ENCODE measurements at regions of chr2 and their contacts with region 1.

Region 1: GRCh38 chr2:50143822-50144575 is 887.9 kb downstream of the NRXN1 start:
- DNase-seq: peak; percentile 68
- ATAC-seq: peak; percentile 100
- H3K4me3 ChIP-seq: peak overlapping the region; percentile 66 to 90 (median 71)
- H3K27ac ChIP-seq: no peak overlapping the region
- H3K4me1 ChIP-seq: no peaks in the 10 kb centered on the region
- H3K27me3 ChIP-seq: no peaks in the 10 kb centered on the region
- CTCF ChIP-seq: peak; percentile 77
- EP300 ChIP-seq: no peak
- POLR2A ChIP-seq: no peak
- RAD21 ChIP-seq: peak; percentile 64

Region 2: DNA sequence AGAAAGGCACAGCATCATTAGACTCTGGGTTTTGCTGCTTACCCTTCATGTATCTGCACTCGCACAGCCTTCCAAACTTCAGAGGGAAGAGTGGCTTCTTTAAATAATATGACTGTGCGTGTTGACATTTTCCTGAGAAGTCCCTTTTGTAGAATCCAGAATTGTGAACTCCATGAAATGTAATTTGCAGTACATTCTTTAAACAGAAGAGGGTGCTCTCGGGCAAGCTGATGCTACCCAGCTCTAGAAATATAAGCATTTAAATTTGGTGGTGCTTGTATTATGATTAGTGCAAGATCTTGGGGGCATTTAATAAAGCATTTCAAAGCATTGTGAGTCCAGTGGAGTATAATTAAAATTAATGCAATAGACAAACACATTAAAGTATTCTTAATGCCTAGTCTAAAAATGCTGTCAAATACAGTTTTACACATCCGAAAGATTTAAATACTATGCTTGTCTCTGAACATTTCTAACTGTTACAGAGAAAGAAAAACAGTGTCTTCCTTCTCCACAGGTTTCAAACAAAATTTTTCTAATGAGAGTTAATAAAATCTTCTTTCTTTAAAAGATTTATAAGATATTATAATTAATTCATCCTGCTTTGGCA is 1543.7 kb before region 1 on chr2:
- CTCF ChIA-PET with region 1: interaction called, 6 read pairs
- POLR2A ChIA-PET with region 1: no interaction called
- in situ Hi-C with region 1: no loop called
- intact Hi-C with region 1: loop called (anchors 5 kb)
- DNase-seq: peak; percentile 42
- ATAC-seq: peak; percentile 50
- H3K4me3 ChIP-seq: no peak overlapping the region
- H3K27ac ChIP-seq: no peak overlapping the region
- H3K4me1 ChIP-seq: no peaks in the 10 kb centered on the region
- H3K27me3 ChIP-seq: no peaks in the 10 kb centered on the region
- CTCF ChIP-seq: peak; percentile 69
- EP300 ChIP-seq: no peak
- POLR2A ChIP-seq: no peak
- RAD21 ChIP-seq: no peak; the same call in 1 of the 2 replicates

Region 3: DNA sequence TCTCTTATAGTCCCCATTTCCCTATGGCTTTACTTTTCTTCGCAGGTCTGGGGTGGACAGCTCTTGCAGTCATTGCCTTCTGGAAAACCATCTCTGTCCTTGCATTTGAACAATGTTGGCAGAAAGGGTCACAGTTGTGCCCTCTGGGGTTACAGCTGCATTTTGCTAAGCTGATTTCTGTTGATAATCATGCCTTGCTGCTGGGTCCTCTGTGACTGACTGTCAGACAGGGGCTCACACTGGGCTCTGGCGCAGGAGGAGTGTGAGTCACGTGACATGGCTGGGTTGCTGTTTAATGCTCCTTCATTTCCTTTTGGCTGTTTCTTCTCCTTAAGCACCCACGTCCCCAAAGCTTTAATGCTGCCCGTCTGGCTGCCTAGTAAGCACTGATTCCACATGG is 1191.9 kb before region 1 on chr2:
- CTCF ChIA-PET with region 1: interaction called, 10 read pairs
- POLR2A ChIA-PET with region 1: no interaction called
- in situ Hi-C with region 1: loop called (anchors 25 kb)
- intact Hi-C with region 1: no loop called
- DNase-seq: no peak
- ATAC-seq: no peak
- H3K4me3 ChIP-seq: no peak overlapping the region
- H3K27ac ChIP-seq: no peak overlapping the region
- H3K4me1 ChIP-seq: 0 out of 2 replicates have a peak, but pooled peaks cover 6% of the 10 kb centered on the region
- H3K27me3 ChIP-seq: no peaks in the 10 kb centered on the region; a peak in 1 of 5 replicates
- CTCF ChIP-seq: no peak
- EP300 ChIP-seq: no peak
- POLR2A ChIP-seq: no peak
- RAD21 ChIP-seq: no peak

Region 4: DNA sequence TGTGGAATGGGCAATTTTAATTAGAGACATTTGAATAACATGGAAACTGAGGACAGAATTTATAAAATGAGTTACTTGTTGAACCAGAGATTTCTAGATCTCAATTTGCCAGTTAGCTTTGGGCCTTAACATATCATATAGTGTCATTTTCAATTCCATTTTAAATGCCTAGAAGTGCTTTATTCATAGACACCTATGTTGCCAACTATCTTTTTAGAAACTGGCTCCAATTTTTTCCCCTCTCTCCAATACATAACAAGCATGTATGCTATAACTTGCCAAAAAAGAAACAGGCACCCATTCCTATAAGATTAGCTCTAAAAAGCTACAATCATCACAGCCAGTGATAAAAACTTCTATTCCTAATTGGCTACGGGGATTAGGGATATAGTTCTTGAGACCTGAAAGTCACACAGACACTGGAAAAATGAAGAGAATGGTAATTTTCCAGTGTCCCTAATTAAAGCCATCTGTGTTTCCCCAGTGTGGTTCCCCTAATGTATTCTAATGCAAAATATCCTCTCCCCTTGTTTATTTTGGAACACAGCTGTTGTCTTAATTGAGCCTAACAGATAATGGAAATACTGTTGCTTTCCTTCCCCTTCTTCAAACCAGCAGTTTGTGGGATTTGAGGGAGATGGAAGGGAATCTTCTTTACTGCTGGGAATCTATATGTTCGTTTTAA is 784.1 kb before region 1 on chr2:
- CTCF ChIA-PET with region 1: no interaction called
- POLR2A ChIA-PET with region 1: no interaction called
- in situ Hi-C with region 1: no loop called
- intact Hi-C with region 1: no loop called
- DNase-seq: no peak
- ATAC-seq: no peak
- H3K4me3 ChIP-seq: no peak overlapping the region
- H3K27ac ChIP-seq: no peak overlapping the region
- H3K4me1 ChIP-seq: no peaks in the 10 kb centered on the region
- H3K27me3 ChIP-seq: no peaks in the 10 kb centered on the region
- CTCF ChIP-seq: no peak
- EP300 ChIP-seq: no peak
- POLR2A ChIP-seq: no peak
- RAD21 ChIP-seq: no peak

Region 5: GRCh38 chr2:49616800-49617199 is 527.2 kb before region 1 on chr2:
- CTCF ChIA-PET with region 1: interaction called, 10 read pairs
- POLR2A ChIA-PET with region 1: no interaction called
- in situ Hi-C with region 1: loop called (anchors 10 kb)
- intact Hi-C with region 1: loop called (anchors 1 kb)
- DNase-seq: peak; percentile 30
- ATAC-seq: peak; percentile 86
- H3K4me3 ChIP-seq: no peak overlapping the region
- H3K27ac ChIP-seq: no peak overlapping the region
- H3K4me1 ChIP-seq: 0 out of 2 replicates have a peak, but pooled peaks cover 2% of the 10 kb centered on the region
- H3K27me3 ChIP-seq: no peaks in the 10 kb centered on the region
- CTCF ChIP-seq: peak; percentile 65
- EP300 ChIP-seq: no peak
- POLR2A ChIP-seq: no peak
- RAD21 ChIP-seq: no peak

Region 6: DNA sequence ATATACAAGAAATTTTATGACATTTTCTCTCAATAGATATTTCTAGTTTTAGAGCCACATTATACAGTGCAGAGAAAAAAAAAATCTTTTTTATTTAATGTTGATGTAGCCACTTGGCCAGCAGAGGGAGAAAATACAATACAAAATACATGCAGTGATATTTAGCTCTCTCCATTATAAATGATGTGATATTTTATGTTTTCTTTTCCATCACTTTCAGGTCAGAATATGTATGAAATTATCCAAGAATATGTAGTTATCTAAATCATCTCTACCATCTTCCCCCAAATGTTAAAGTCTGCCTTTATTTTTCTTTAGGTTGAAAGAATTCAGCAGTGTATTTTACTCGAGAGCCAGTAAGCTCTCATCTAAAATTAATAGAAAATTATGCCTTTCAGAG is 456.1 kb before region 1 on chr2:
- CTCF ChIA-PET with region 1: interaction called, 6 read pairs
- POLR2A ChIA-PET with region 1: no interaction called
- in situ Hi-C with region 1: no loop called
- intact Hi-C with region 1: loop called (anchors 1 kb)
- DNase-seq: no peak
- ATAC-seq: peak; percentile 62
- H3K4me3 ChIP-seq: no peak overlapping the region
- H3K27ac ChIP-seq: no peak overlapping the region
- H3K4me1 ChIP-seq: no peaks in the 10 kb centered on the region
- H3K27me3 ChIP-seq: no peaks in the 10 kb centered on the region
- CTCF ChIP-seq: no peak
- EP300 ChIP-seq: no peak
- POLR2A ChIP-seq: no peak
- RAD21 ChIP-seq: no peak

Region 7: DNA sequence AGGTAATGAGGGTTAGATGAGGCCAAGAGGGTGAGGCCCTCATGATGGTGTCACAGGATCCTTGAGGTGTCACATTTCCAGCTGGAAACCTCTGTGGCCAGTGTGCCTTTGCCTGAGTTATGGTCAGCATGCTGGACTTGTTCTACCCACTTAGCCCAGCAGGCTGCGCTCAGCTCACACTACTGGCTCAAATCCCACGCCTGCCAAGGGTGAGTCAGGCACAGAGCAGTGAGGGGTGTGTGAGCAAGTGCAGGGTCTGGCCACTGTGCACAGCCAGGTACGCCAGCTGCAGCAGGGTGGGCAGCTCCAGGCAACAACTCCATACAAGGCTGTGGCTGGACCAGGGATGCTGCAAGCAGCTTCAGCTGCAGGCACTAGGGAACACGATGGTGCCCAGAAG is 373.1 kb before region 1 on chr2:
- CTCF ChIA-PET with region 1: no interaction called
- POLR2A ChIA-PET with region 1: no interaction called
- in situ Hi-C with region 1: loop called (anchors 5 kb)
- intact Hi-C with region 1: loop called (anchors 1 kb)
- DNase-seq: peak; percentile 53
- ATAC-seq: peak; percentile 100
- H3K4me3 ChIP-seq: no peak overlapping the region
- H3K27ac ChIP-seq: no peak overlapping the region
- H3K4me1 ChIP-seq: no peaks in the 10 kb centered on the region
- H3K27me3 ChIP-seq: no peaks in the 10 kb centered on the region
- CTCF ChIP-seq: peak; percentile 94
- EP300 ChIP-seq: no peak
- POLR2A ChIP-seq: no peak
- RAD21 ChIP-seq: peak; percentile 86

Region 8: GRCh38 chr2:50111067-50111466 is 32.9 kb before region 1 on chr2:
- CTCF ChIA-PET with region 1: no interaction called
- POLR2A ChIA-PET with region 1: no interaction called
- in situ Hi-C with region 1: no loop called
- intact Hi-C with region 1: no loop called
- DNase-seq: no peak
- ATAC-seq: no peak
- H3K4me3 ChIP-seq: no peak overlapping the region
- H3K27ac ChIP-seq: no peak overlapping the region
- H3K4me1 ChIP-seq: no peaks in the 10 kb centered on the region
- H3K27me3 ChIP-seq: no peaks in the 10 kb centered on the region
- CTCF ChIP-seq: no peak
- EP300 ChIP-seq: no peak
- POLR2A ChIP-seq: no peak
- RAD21 ChIP-seq: no peak

Region 9: DNA sequence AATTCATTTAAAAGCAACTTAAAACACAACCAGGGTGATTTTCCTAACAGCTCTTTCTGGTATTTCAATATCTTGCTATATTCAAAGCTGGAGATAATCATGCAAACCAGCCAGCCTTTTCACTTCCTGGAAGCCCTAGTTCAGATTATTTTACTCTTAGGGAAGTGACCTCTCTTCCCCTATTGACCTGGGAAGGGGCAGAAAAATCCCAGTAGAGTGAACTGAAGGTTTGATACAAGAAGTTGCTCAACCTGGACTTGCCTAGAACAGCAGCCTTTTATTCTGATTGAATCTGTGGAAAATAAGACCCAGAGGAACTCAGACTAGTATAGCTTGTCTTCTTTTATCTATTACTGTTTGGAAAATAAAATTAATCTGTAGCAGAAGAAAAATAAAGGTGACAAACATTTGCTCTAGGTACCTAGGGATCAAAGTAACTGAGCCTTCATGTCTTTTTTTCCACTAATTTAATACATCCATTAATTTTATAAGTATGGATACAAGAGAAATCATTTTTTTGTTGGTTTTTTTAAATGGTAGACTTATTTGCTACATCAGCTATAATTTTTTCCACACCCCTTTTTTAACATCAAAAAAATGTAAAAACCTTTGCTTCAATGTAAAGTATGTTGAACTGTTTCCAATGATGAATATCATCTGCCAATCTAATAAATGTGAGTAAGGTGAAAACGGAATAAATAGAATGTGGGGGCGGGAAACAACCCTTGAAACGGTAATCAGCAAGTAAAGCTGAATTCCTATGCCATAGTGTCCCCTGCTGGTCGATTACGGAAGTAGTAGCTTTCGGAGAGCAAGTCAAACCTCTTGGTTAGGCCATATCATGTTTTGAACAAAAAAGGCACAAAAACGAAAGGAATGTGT is 258.0 kb after region 1 on chr2:
- CTCF ChIA-PET with region 1: no interaction called
- POLR2A ChIA-PET with region 1: no interaction called
- in situ Hi-C with region 1: no loop called
- intact Hi-C with region 1: loop called (anchors 1 kb)
- DNase-seq: peak; percentile 46
- ATAC-seq: peak; percentile 75
- H3K4me3 ChIP-seq: no peak overlapping the region
- H3K27ac ChIP-seq: no peak overlapping the region
- H3K4me1 ChIP-seq: no peaks in the 10 kb centered on the region
- H3K27me3 ChIP-seq: no peaks in the 10 kb centered on the region
- CTCF ChIP-seq: peak; percentile 90
- EP300 ChIP-seq: no peak
- POLR2A ChIP-seq: no peak
- RAD21 ChIP-seq: peak; percentile 64; the same call in 1 of the 2 replicates